ENCODE measurements at regions of chr7 and their contacts with region 1.

Region 1: GRCh38 chr7:43302211-43302711 is 189.8 kb downstream of the HECW1 start:
- DNase-seq: peak; percentile 73
- H3K4me3 Mint-ChIP-seq: no peak overlapping the region
- H3K27ac Mint-ChIP-seq: no peak overlapping the region
- H3K4me1 Mint-ChIP-seq: peaks cover 36% of the 10 kb centered on the region
- H3K27me3 Mint-ChIP-seq: no peaks in the 10 kb centered on the region

Region 2: DNA sequence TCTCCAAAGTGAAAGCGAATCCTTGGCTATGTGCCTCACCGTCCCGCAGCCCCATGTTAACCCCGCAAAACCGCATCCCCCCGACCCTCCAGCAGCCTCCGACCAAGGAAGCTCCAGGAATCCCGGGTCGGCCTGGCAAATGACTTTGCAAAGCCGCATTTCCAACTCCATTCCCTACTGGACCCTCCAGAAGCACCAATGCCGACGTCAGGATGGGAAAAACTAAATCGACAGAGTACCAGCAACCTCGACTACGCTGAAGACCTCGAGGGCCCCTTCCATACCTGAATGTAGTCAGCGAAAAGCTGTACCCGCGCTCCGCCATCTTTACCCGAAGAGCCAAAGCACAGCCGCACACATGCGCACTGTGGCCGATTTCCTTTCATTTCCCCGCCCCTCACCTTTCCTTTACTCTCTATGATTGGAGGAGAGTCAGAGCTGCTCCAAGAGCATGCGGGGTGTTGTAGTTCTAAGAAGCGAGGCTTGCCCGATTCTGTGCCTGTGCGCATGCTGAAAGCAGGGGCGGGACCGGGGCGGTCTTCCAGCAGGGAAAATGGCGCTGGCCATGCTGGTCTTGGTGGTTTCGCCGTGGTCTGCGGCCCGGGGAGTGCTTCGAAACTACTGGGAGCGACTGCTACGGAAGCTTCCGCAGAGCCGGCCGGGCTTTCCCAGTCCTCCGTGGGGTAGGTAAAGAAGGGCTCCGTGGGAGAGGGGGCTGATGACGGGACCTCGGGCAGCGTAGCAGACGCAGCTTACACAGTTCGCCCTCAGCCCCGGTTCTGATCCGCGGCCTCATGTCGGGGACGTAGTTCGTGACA is 370.2 kb before region 1 on chr7 and contains the starts of genes MRPL32 and PSMA2:
- CTCF ChIA-PET with region 1: no interaction called
- intact Hi-C with region 1: loop called (anchors 2 kb)
- DNase-seq: peak; percentile 95
- H3K4me3 Mint-ChIP-seq: peak within 1 kb of the TSS; percentile 100
- H3K27ac Mint-ChIP-seq: peak within 1 kb of the TSS; percentile 100
- H3K4me1 Mint-ChIP-seq: peaks cover 60% of the 10 kb centered on the region
- H3K27me3 Mint-ChIP-seq: no peaks in the 10 kb centered on the region
- total RNA-seq, gene MRPL32: 67.4 to 71.8 TPM
- total RNA-seq, gene PSMA2: 199 to 221 TPM

Region 3: DNA sequence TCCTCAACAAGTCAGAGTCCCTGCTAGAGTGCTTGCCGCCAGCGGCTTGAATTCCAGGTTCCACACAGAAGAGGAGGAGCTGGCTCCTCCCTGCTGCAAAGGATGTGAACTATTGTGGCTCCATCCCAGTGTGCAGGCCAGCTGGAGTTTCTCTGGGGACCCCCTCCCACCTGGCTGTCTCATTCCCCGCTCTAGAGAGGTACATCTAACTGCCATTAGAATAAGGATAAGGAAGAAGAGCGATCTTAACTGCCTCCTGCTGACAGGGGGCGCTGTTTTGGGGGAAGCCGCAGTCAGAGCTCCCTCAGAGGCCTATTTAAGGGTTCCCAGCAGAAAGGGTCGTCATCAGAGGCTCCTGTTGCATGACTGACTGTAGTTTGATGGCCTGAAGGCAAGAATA is 230.7 kb before region 1 on chr7:
- CTCF ChIA-PET with region 1: no interaction called
- intact Hi-C with region 1: loop called (anchors 1 kb)
- DNase-seq: peak; percentile 47
- H3K4me3 Mint-ChIP-seq: no peak overlapping the region
- H3K27ac Mint-ChIP-seq: no peak overlapping the region
- H3K4me1 Mint-ChIP-seq: peaks cover 6% of the 10 kb centered on the region
- H3K27me3 Mint-ChIP-seq: peaks cover 26% of the 10 kb centered on the region

Region 4: GRCh38 chr7:43148161-43148731 is 154.0 kb before region 1 on chr7:
- CTCF ChIA-PET with region 1: no interaction called
- intact Hi-C with region 1: no loop called
- DNase-seq: no peak
- H3K4me3 Mint-ChIP-seq: no peak overlapping the region
- H3K27ac Mint-ChIP-seq: no peak overlapping the region
- H3K4me1 Mint-ChIP-seq: no peaks in the 10 kb centered on the region
- H3K27me3 Mint-ChIP-seq: peaks cover 23% of the 10 kb centered on the region

Region 5: DNA sequence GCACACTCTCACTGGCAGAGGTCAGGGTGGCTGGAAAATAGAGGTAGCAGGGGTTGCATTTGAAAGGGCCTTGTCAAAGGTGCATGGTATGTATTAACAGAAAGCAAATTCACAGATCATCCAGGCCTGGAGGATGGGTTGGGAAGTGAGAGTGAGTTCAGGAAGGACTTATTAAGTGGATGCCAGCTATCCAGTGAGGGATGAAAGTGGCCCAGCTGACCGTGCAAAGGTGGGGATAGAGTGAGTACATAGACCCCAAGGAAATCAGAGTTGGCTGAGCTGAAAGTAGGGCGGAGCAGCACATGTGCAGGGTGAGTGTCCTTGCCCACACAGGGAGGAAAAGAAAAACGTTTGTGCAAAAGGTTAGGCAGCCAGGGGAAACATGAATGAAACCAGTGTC is 131.7 kb before region 1 on chr7:
- CTCF ChIA-PET with region 1: no interaction called
- intact Hi-C with region 1: no loop called
- DNase-seq: no peak
- H3K4me3 Mint-ChIP-seq: no peak overlapping the region
- H3K27ac Mint-ChIP-seq: no peak overlapping the region
- H3K4me1 Mint-ChIP-seq: no peaks in the 10 kb centered on the region
- H3K27me3 Mint-ChIP-seq: peaks cover 6% of the 10 kb centered on the region

Region 6: GRCh38 chr7:43273939-43274719 is 28.1 kb before region 1 on chr7:
- CTCF ChIA-PET with region 1: no interaction called
- intact Hi-C with region 1: no loop called
- DNase-seq: no peak
- H3K4me3 Mint-ChIP-seq: no peak overlapping the region
- H3K27ac Mint-ChIP-seq: no peak overlapping the region
- H3K4me1 Mint-ChIP-seq: no peaks in the 10 kb centered on the region
- H3K27me3 Mint-ChIP-seq: peaks cover 10% of the 10 kb centered on the region

Region 7: DNA sequence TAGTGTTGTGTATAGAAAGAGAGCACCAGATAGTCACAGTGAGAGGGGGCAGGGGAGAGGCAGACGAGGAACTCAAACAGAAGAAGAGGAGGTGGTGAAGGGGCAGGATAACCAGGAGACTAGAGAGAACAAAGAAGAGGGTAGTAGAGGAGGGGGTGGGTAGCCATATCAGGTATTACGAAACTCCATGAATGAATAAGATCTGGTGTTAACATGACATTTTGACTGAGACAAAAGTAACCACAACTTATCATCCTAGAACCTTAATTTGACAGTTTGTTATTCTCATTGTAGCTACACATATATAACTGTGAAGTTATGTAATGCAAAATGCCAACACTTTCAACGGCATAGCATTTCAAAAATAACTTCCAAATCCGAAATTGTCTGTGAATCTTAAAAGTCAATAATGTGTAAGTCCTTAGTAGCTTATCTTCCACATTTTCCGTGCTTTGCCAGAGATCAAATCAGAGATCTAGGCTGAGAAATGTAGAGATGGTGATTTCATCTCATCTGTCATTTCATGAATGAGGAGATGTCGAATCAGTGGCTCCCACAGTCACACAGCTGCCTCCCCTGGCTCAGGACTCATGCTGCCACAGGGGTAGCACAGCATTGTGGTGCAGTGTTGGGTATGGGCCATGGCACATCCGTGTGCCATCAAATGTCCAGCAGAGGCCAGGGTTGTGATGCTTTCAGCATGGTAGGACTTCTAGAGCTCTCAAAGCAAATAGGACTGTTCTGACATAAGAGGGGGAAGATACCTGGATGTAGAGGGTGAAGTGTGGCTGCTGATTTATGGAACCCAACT is 12.3 kb after region 1 on chr7:
- CTCF ChIA-PET with region 1: interaction called, 7 read pairs
- intact Hi-C with region 1: loop called (anchors 1 kb)
- DNase-seq: peak; percentile 47
- H3K4me3 Mint-ChIP-seq: no peak overlapping the region
- H3K27ac Mint-ChIP-seq: peak overlapping the region; percentile 0
- H3K4me1 Mint-ChIP-seq: peaks cover 18% of the 10 kb centered on the region
- H3K27me3 Mint-ChIP-seq: no peaks in the 10 kb centered on the region

Region 8: GRCh38 chr7:43439631-43440401 is 137.6 kb after region 1 on chr7:
- CTCF ChIA-PET with region 1: no interaction called
- intact Hi-C with region 1: loop called (anchors 5 kb)
- DNase-seq: peak; percentile 72
- H3K4me3 Mint-ChIP-seq: no peak overlapping the region
- H3K27ac Mint-ChIP-seq: no peak overlapping the region
- H3K4me1 Mint-ChIP-seq: peaks cover 5% of the 10 kb centered on the region
- H3K27me3 Mint-ChIP-seq: no peaks in the 10 kb centered on the region

Region 9: DNA sequence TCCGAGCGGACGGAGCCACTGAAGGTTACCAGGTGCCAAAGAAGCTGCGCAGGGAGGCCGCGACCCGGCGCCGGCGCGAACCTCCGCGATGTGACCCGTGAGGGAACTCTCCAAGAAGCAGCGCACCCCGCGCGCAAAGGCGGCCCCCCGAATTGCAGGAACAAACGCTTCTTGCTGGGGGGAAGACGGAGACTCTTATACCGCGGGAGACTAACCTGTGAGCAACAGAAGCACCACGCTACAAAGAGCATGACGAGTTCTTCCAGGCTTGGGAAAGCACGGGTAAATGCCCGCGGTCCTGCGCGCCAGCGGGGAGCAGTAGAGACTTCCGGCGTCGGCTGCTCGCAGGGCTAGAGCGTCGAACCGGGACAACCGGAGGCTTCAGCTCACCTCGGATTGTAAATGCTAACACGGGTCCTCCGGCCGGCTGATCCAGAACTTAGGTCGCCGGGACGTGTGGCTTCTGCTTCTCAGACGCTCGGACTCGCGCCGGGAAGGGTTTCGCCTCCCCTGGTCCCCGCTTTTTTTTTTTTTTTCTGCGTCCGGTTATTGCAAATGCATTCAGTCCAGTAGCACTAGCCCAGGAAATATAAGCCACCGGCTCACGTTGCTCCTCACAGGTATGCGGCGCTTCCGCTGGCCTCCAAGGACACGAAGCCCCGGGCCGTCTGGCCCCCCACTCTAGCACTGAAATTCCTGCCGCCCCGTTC is 427.1 kb after region 1 on chr7 and contains the start of gene COA1:
- CTCF ChIA-PET with region 1: no interaction called
- intact Hi-C with region 1: loop called (anchors 5 kb)
- DNase-seq: peak; percentile 87
- H3K4me3 Mint-ChIP-seq: peak within 1 kb of the TSS; percentile 90
- H3K27ac Mint-ChIP-seq: peak within 1 kb of the TSS; percentile 89
- H3K4me1 Mint-ChIP-seq: peaks cover 35% of the 10 kb centered on the region
- H3K27me3 Mint-ChIP-seq: peaks cover 7% of the 10 kb centered on the region
- total RNA-seq, gene COA1: 85.9 to 87.2 TPM

Region 10: GRCh38 chr7:43869006-43869866 is 567.0 kb after region 1 on chr7 and contains the start of gene MRPS24:
- CTCF ChIA-PET with region 1: no interaction called
- intact Hi-C with region 1: loop called (anchors 10 kb)
- DNase-seq: peak; percentile 98
- H3K4me3 Mint-ChIP-seq: peak within 1 kb of the TSS; percentile 81
- H3K27ac Mint-ChIP-seq: peak within 1 kb of the TSS; percentile 89
- H3K4me1 Mint-ChIP-seq: peaks cover 20% of the 10 kb centered on the region
- H3K27me3 Mint-ChIP-seq: no peaks in the 10 kb centered on the region
- total RNA-seq, gene MRPS24: 153 TPM

Measured in activated naive CD4-positive, alpha-beta T cell treated with anti-CD3 and anti-CD28 coated beads for 36 hours (primary cell).